Pancreas (tissue), 10 donors: ENCODE measurements at regions of chr4 and their contacts with region 1.

Region 1: GRCh38 chr4:53196882-53197771 is 168.7 kb downstream of the SCFD2 start:
- DNase-seq: no peak
- ATAC-seq: peak in 3 of 4 donors; percentile 83 to 87 (median 83)
- H3K4me3 ChIP-seq: no peak overlapping the region
- H3K27ac ChIP-seq: no peak overlapping the region
- H3K4me1 ChIP-seq: no peaks in the 10 kb centered on the region
- H3K27me3 ChIP-seq: no peaks in the 10 kb centered on the region
- CTCF ChIP-seq: peak; percentile 24 to 63 (median 50)

Region 2: GRCh38 chr4:53365486-53366300 is 168.6 kb after region 1 on chr4 and contains the start of gene SCFD2:
- intact Hi-C with region 1: no loop called
- DNase-seq: peak; percentile 95 to 98 (median 96)
- ATAC-seq: peak; percentile 100
- H3K4me3 ChIP-seq: peak within 1 kb of the TSS; percentile 74 to 99 (median 82)
- H3K27ac ChIP-seq: peak within 1 kb of the TSS in 3 of 4 donors; percentile 23 to 60 (median 34)
- H3K4me1 ChIP-seq: peaks cover 3 to 38% (median 6%) of the 10 kb centered on the region in 3 donors
- H3K27me3 ChIP-seq: peaks cover 0 to 7% (median 0%) of the 10 kb centered on the region in 4 donors
- CTCF ChIP-seq: no peak
- total RNA-seq, gene SCFD2: 6.1 to 13.5 (median 10.1) TPM

Region 3: DNA sequence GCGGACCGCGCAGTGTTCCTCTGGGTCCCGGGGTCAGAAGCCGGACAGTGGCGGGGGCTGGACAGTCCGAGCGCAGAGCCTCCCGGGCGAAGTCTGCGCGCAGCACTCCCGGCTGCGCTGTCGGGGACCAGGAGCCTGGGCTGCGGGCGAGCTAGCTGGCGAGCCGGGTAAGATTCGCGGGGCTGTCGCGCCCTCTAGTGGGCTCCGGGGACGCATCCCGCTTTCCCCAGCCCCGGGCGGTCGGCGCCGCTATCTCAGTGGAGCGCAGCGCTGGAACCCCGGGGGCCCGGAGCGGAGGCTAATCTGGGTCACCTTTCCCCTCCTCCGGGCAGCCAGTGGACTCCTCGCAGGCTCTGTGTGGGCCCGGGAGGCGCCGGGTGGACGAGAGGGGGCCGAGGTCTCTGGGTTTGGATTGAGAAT is 1036.2 kb after region 1 on chr4:
- intact Hi-C with region 1: loop called in 2 of 3 experiments (anchors 10 kb)
- DNase-seq: peak; percentile 70 to 97 (median 84)
- ATAC-seq: peak; percentile 93 to 96 (median 93)
- H3K4me3 ChIP-seq: peak overlapping the region; percentile 31 to 62 (median 34)
- H3K27ac ChIP-seq: no peak overlapping the region
- H3K4me1 ChIP-seq: peaks cover 0 to 18% (median 3%) of the 10 kb centered on the region in 3 donors
- H3K27me3 ChIP-seq: peaks cover 6 to 44% (median 16%) of the 10 kb centered on the region in 4 donors
- CTCF ChIP-seq: peak; percentile 79 to 88 (median 80)